IMR-90 (cell line): ENCODE measurements at regions of chr10 and their contacts with region 1.

Region 1: DNA sequence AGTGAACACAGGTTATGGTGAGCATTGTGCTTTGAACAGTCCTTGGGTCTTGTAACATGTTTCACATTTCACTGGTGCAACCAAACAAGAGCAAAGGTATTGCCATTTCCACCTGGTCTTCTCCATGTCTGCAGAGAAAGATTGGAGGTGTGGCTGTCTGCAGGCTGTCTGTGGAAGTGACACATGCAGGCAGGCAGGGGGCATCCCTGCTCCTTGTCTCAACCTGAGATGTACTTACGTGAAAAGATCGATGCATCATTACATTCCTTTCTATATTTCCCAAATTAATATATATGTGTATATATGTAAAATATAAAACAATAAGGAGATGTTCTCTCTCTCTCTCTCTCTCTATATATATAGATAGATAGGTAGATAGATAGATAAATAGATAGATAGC is 54.3 kb downstream of the LRRC18 start:
- DNase-seq: no peak
- ATAC-seq: no peak
- H3K4me3 ChIP-seq: no peak overlapping the region
- H3K27ac ChIP-seq: no peak overlapping the region
- H3K4me1 ChIP-seq: no peaks in the 10 kb centered on the region
- H3K27me3 ChIP-seq: peaks cover 4% of the 10 kb centered on the region
- CTCF ChIP-seq: 0 out of 2 replicates have a peak, but pooled peaks have one; percentile 15
- POLR2A ChIP-seq: no peak
- RAD21 ChIP-seq: 0 out of 2 replicates have a peak, but pooled peaks have one; percentile 6

Region 2: GRCh38 chr10:48923748-48924147 is 38.4 kb after region 1 on chr10:
- CTCF ChIA-PET with region 1: no interaction called
- POLR2A ChIA-PET with region 1: no interaction called
- dilution Hi-C with region 1: no loop called
- in situ Hi-C with region 1: no loop called
- intact Hi-C with region 1: loop called (anchors 1 kb)
- DNase-seq: no peak
- ATAC-seq: no peak
- H3K4me3 ChIP-seq: no peak overlapping the region
- H3K27ac ChIP-seq: no peak overlapping the region
- H3K4me1 ChIP-seq: no peaks in the 10 kb centered on the region
- H3K27me3 ChIP-seq: peaks cover 11% of the 10 kb centered on the region
- CTCF ChIP-seq: no peak
- POLR2A ChIP-seq: no peak
- RAD21 ChIP-seq: no peak

Region 3: GRCh38 chr10:49225218-49225876 is 340.0 kb after region 1 on chr10:
- CTCF ChIA-PET with region 1: no interaction called
- POLR2A ChIA-PET with region 1: no interaction called
- dilution Hi-C with region 1: no loop called
- in situ Hi-C with region 1: no loop called
- intact Hi-C with region 1: no loop called
- DNase-seq: no peak
- ATAC-seq: no peak
- H3K4me3 ChIP-seq: no peak overlapping the region
- H3K27ac ChIP-seq: no peak overlapping the region
- H3K4me1 ChIP-seq: no peaks in the 10 kb centered on the region
- H3K27me3 ChIP-seq: peaks cover 31% of the 10 kb centered on the region
- CTCF ChIP-seq: no peak
- POLR2A ChIP-seq: no peak
- RAD21 ChIP-seq: no peak